ENCODE measurements at regions of chr6 and their contacts with region 1.

Region 1: GRCh38 chr6:142867988-142868812 is 76.8 kb downstream of the HIVEP2 start:
- DNase-seq: no peak
- H3K4me3 ChIP-seq: peak overlapping the region in 1 of 4 donors; percentile 6
- H3K27ac ChIP-seq: peak overlapping the region in 1 of 4 donors; percentile 27
- H3K4me1 ChIP-seq: peaks cover 39 to 42% (median 40%) of the 10 kb centered on the region in 4 donors
- H3K27me3 ChIP-seq: no peaks in the 10 kb centered on the region
- CTCF ChIP-seq: no peak
- EP300 ChIP-seq: no peak
- POLR2A ChIP-seq: no peak

Region 2: DNA sequence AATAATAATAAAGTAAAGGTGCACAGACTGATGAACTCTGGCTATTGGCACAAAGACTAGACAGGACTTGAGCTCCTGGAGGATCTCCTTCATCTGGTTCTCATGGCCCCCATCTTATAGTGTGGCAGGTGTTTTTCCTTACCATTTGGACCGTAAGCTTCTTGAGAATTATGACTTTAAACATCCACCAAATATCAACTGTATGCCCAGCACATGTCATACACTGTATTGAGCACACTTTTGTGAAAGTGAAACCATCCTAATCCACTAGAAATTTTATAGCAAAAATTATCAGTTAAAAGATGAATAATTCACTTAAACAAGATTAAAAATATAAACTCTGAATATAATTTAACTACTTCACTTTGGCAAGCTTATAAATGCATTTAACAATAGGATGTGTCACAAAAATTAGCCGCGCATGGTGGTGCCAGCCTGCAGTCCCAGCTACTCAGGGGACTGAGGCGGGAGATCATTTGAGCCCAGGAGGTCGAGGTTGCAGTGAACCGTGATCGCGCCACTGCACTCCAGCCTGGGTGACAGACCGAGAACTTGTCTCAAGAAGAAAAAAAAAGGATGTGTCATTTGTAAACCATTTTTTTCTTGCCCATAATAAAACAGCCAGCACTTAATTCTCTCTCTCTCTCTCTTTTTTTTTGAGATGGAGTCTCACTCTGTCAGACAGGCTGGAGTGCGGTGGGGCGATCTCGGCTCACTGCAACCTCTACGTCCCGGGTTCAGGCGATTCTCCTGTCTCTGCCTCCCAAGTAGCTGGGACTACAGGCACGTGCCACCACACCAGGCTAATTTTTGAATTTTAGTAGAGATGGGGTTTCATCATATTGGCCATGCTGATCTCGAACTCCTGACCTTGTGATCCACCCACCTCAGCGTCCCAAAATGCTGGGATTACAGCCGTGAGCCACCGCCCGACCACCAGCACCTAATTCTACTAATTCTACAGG is 67.6 kb after region 1 on chr6:
- intact Hi-C with region 1: loop called (anchors 5 kb)
- DNase-seq: no peak
- H3K4me3 ChIP-seq: no peak overlapping the region
- H3K27ac ChIP-seq: no peak overlapping the region
- H3K4me1 ChIP-seq: peaks cover 10 to 40% (median 30%) of the 10 kb centered on the region in 4 donors
- H3K27me3 ChIP-seq: no peaks in the 10 kb centered on the region
- CTCF ChIP-seq: no peak
- EP300 ChIP-seq: no peak
- POLR2A ChIP-seq: no peak

Measured in esophagus muscularis mucosa (tissue), 4 donors.